B cell (primary cell): ENCODE measurements at regions of chr5 and their contacts with region 1.

Region 1: GRCh38 chr5:151126199-151126645 is 31.4 kb downstream of the ANXA6 start:
- DNase-seq: peak; percentile 80
- ATAC-seq: no peak
- H3K4me3 ChIP-seq: peak overlapping the region in 1 of 5 experiments; percentile 12
- H3K4me3 Mint-ChIP-seq: peak overlapping the region; percentile 88
- H3K27ac ChIP-seq: peak overlapping the region; percentile 87 to 91
- H3K27ac Mint-ChIP-seq: peak overlapping the region; percentile 91
- H3K4me1 ChIP-seq: peaks cover 50 to 74% of the 10 kb centered on the region in 2 donors
- H3K4me1 Mint-ChIP-seq: peaks cover 78% of the 10 kb centered on the region
- H3K27me3 ChIP-seq: no peaks in the 10 kb centered on the region
- H3K27me3 Mint-ChIP-seq: no peaks in the 10 kb centered on the region
- CTCF ChIP-seq: peak; percentile 78

Region 2: GRCh38 chr5:151080623-151081430 is 45.4 kb before region 1 on chr5 and contains the start of gene TNIP1:
- CTCF ChIA-PET with region 1: interaction called, 25 read pairs
- POLR2A ChIA-PET with region 1: interaction called, 5 read pairs
- intact Hi-C with region 1: loop called (anchors 1 kb)
- DNase-seq: peak; percentile 96
- ATAC-seq: peak; percentile 88
- H3K4me3 ChIP-seq: peak within 1 kb of the TSS; percentile 71 to 96 (median 85)
- H3K4me3 Mint-ChIP-seq: peak within 1 kb of the TSS; percentile 87
- H3K27ac ChIP-seq: peak within 1 kb of the TSS; percentile 96 to 100
- H3K27ac Mint-ChIP-seq: peak within 1 kb of the TSS; percentile 88
- H3K4me1 ChIP-seq: peaks cover 83 to 84% of the 10 kb centered on the region in 2 donors
- H3K4me1 Mint-ChIP-seq: peaks cover 82% of the 10 kb centered on the region
- H3K27me3 ChIP-seq: no peaks in the 10 kb centered on the region
- H3K27me3 Mint-ChIP-seq: no peaks in the 10 kb centered on the region
- CTCF ChIP-seq: no peak
- total RNA-seq, gene TNIP1: 294 and 295 TPM in 2 replicates

Region 3: GRCh38 chr5:151157426-151158286 is 31.4 kb after region 1 on chr5 and contains the start of gene ANXA6:
- CTCF ChIA-PET with region 1: interaction called, 1,701 read pairs
- POLR2A ChIA-PET with region 1: interaction called, 25 read pairs
- intact Hi-C with region 1: loop called (anchors 1 kb)
- DNase-seq: peak; percentile 72
- ATAC-seq: peak; percentile 77
- H3K4me3 ChIP-seq: peak within 1 kb of the TSS; percentile 87 to 93 (median 89)
- H3K4me3 Mint-ChIP-seq: peak within 1 kb of the TSS; percentile 97
- H3K27ac ChIP-seq: peak within 1 kb of the TSS; percentile 76 to 91
- H3K27ac Mint-ChIP-seq: peak within 1 kb of the TSS; percentile 97
- H3K4me1 ChIP-seq: peaks cover 63 to 74% of the 10 kb centered on the region in 2 donors
- H3K4me1 Mint-ChIP-seq: peaks cover 73% of the 10 kb centered on the region
- H3K27me3 ChIP-seq: no peaks in the 10 kb centered on the region
- H3K27me3 Mint-ChIP-seq: no peaks in the 10 kb centered on the region
- CTCF ChIP-seq: no peak
- total RNA-seq, gene ANXA6: 300 and 316 TPM in 2 replicates

Region 4: GRCh38 chr5:151191659-151192058 is 65.4 kb after region 1 on chr5:
- CTCF ChIA-PET with region 1: interaction called, 16 read pairs
- POLR2A ChIA-PET with region 1: interaction called, 4 read pairs
- intact Hi-C with region 1: loop called (anchors 1 kb)
- DNase-seq: no peak
- ATAC-seq: no peak
- H3K4me3 ChIP-seq: peak overlapping the region in 1 of 5 experiments; percentile 8
- H3K4me3 Mint-ChIP-seq: peak overlapping the region; percentile 16
- H3K27ac ChIP-seq: peak overlapping the region; percentile 19 to 78
- H3K27ac Mint-ChIP-seq: peak overlapping the region; percentile 6
- H3K4me1 ChIP-seq: peaks cover 47 to 67% of the 10 kb centered on the region in 2 donors
- H3K4me1 Mint-ChIP-seq: peaks cover 76% of the 10 kb centered on the region
- H3K27me3 ChIP-seq: no peaks in the 10 kb centered on the region
- H3K27me3 Mint-ChIP-seq: no peaks in the 10 kb centered on the region
- CTCF ChIP-seq: no peak

Region 5: DNA sequence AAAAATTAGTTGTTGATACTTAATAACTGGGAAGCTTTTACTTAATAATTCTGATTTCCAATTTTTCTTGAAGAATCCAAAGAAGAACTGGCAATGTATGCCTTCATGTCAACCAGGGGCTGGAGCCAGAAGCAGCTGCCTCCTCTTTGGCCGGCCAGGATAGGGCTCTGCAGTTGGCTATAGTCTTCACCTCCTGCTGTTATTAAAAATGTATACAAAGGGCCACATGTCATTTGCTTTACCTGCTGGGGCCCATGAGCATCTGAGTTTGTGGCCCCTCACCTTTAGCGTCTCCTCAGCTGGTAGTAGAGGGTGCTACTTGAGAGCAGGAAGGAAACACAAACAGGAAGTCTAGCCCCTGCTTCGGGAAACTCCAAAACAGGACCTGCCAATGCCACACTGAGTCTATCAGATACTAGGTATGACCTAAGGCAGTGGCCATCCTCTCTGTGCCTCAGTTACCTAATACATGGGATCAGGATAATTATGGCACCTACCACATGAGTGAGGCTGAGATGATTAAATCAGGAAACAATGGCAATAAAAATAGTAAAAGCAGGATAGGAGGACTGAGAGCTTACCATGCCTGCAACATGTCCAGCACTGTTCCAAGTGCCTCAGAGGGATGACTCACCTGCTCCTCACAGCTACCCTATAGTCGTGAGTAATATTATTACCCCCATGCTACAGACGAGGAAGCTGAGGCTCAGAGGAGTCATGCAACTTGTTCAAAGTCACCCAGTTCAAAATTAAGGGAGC is 76.3 kb after region 1 on chr5:
- CTCF ChIA-PET with region 1: interaction called, 12 read pairs
- POLR2A ChIA-PET with region 1: no interaction called
- intact Hi-C with region 1: no loop called
- DNase-seq: peak; percentile 58
- ATAC-seq: peak; percentile 56
- H3K4me3 ChIP-seq: no peak overlapping the region
- H3K4me3 Mint-ChIP-seq: peak overlapping the region; percentile 67
- H3K27ac ChIP-seq: peak overlapping the region; percentile 7 to 74
- H3K27ac Mint-ChIP-seq: peak overlapping the region; percentile 75
- H3K4me1 ChIP-seq: peaks cover 27 to 37% of the 10 kb centered on the region in 2 donors
- H3K4me1 Mint-ChIP-seq: peaks cover 55% of the 10 kb centered on the region
- H3K27me3 ChIP-seq: no peaks in the 10 kb centered on the region
- H3K27me3 Mint-ChIP-seq: no peaks in the 10 kb centered on the region
- CTCF ChIP-seq: no peak

Region 6: DNA sequence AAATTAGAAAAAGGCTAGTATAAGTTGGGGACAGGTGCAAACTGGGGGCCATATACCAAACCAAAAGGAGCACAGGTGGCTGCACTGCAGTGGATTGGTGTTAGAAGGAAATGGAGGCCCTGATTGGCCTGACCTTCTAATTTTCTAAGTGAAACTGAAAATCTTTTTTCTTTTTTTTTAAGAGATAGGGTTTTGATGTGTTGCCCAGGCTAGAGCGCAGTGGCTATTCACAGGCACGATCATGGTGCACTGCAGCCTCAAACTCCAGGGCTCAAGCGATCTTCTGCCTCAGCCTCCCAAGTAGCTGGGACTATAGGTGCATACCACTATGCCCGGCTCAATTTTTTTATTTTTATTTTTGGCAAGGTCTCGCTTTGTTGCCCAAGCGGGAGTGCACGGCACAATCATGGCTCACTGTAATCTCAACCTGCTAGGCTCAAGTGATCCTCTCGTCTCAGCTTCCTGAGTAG is 107.4 kb after region 1 on chr5:
- CTCF ChIA-PET with region 1: interaction called, 158 read pairs
- POLR2A ChIA-PET with region 1: interaction called, 11 read pairs
- intact Hi-C with region 1: loop called (anchors 1 kb)
- DNase-seq: peak; percentile 67
- ATAC-seq: peak; percentile 52
- H3K4me3 ChIP-seq: peak overlapping the region in 3 of 5 experiments; percentile 2 to 32 (median 31)
- H3K4me3 Mint-ChIP-seq: peak overlapping the region; percentile 89
- H3K27ac ChIP-seq: peak overlapping the region; percentile 69 to 92
- H3K27ac Mint-ChIP-seq: peak overlapping the region; percentile 95
- H3K4me1 ChIP-seq: peaks cover 67 to 72% of the 10 kb centered on the region in 2 donors
- H3K4me1 Mint-ChIP-seq: peaks cover 76% of the 10 kb centered on the region
- H3K27me3 ChIP-seq: no peaks in the 10 kb centered on the region
- H3K27me3 Mint-ChIP-seq: no peaks in the 10 kb centered on the region
- CTCF ChIP-seq: no peak